ENCODE measurements at regions of chr15 and their contacts with region 1.

Region 1: GRCh38 chr15:67863442-67863987 is 23.7 kb upstream of the RNU6-1 start:
- DNase-seq: peak; percentile 82 to 86
- H3K4me3 ChIP-seq: peak overlapping the region; percentile 45
- H3K4me3 Mint-ChIP-seq: peak overlapping the region; percentile 70
- H3K27ac Mint-ChIP-seq: peak overlapping the region; percentile 80
- H3K4me1 ChIP-seq: peaks cover 9% of the 10 kb centered on the region; the same call in 1 of the 2 replicates
- H3K4me1 Mint-ChIP-seq: peaks cover 15% of the 10 kb centered on the region
- H3K27me3 ChIP-seq: no peaks in the 10 kb centered on the region
- H3K27me3 Mint-ChIP-seq: no peaks in the 10 kb centered on the region
- CTCF ChIP-seq: peak; percentile 89 to 91

Region 2: DNA sequence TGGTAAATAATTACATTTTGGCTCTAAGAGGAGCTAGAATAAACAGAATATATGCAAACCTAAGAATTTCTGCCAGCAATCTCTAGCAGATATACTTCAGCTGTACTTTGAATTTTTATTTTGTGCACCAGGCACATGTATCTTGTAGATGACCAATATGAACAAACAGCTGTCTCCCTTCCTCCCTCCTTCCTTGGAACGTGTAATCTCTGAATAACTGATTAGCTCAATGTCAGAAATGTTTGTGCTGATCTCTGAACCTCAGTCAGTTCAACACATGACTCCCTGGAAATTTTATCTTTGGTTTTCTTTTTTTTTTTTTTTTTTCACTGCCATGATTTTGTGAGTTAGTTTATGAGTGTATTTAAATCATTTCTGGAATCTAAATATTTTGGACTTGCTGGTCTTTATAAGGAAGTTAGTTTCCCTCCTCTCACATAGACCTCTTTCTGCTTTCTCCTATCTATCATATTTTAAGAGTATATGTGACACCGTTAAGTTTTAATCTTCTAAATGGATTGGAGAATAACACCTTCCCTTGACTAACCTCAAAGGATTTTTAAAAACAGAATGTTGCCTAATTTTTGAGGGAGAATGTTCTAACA is 251.6 kb before region 1 on chr15:
- CTCF ChIA-PET with region 1: no interaction called
- POLR2A ChIA-PET with region 1: no interaction called
- intact Hi-C with region 1: no loop called
- DNase-seq: no peak
- H3K4me3 ChIP-seq: no peak overlapping the region
- H3K4me3 Mint-ChIP-seq: no peak overlapping the region
- H3K27ac Mint-ChIP-seq: no peak overlapping the region
- H3K4me1 ChIP-seq: no peaks in the 10 kb centered on the region
- H3K4me1 Mint-ChIP-seq: peaks cover 7% of the 10 kb centered on the region
- H3K27me3 ChIP-seq: no peaks in the 10 kb centered on the region
- H3K27me3 Mint-ChIP-seq: no peaks in the 10 kb centered on the region
- CTCF ChIP-seq: no peak

Region 3: DNA sequence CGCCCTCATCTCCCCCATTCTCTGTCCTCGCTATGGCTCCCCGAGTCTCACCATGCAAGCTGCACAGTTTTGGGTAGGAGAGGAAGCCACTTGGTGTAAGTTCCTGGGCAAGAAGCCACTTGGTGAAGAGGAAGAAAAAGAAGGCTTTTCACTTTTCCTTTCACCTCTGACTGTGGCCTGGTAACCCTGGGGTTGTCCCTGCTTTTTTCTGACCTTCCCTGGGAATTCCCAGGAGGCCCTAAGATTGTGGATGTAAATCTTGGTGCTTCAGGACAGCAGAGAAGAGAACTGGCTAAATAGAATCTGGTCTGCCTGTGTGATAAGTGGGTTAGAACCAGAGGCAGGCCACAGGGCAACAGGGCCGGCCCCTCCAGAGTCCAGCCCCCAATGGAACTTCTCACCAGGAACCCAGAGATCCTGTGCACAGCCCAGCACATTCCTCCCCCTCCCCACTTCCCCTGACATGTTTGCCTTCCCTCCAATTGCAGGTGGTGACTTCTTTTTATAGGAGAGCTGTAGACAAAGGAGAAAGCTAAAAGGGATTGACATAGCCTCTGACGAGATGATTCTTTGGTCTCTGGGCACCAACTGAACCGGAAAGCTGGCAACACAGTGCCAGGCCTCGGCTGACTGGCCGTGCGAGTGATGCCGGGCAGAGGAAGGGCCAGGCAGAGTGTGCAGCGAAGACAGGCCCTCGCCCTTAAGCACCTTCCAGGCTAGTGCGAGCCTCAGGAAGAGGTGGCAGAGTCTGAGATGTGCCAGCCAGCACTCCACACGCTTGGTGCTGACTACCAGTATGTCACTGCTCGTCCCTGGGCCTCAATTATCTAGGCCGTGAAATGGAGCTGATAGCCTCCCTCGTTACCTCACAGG is 57.6 kb before region 1 on chr15:
- CTCF ChIA-PET with region 1: no interaction called
- POLR2A ChIA-PET with region 1: no interaction called
- intact Hi-C with region 1: no loop called
- DNase-seq: peak in 1 of 2 experiments; percentile 22
- H3K4me3 ChIP-seq: no peak overlapping the region
- H3K4me3 Mint-ChIP-seq: no peak overlapping the region
- H3K27ac Mint-ChIP-seq: no peak overlapping the region
- H3K4me1 ChIP-seq: no peaks in the 10 kb centered on the region
- H3K4me1 Mint-ChIP-seq: no peaks in the 10 kb centered on the region
- H3K27me3 ChIP-seq: no peaks in the 10 kb centered on the region
- H3K27me3 Mint-ChIP-seq: no peaks in the 10 kb centered on the region
- CTCF ChIP-seq: no peak

Region 4: GRCh38 chr15:68154923-68155559 is 291.5 kb after region 1 on chr15:
- CTCF ChIA-PET with region 1: interaction called, 4 read pairs
- POLR2A ChIA-PET with region 1: no interaction called
- intact Hi-C with region 1: loop called (anchors 1 kb)
- DNase-seq: peak in 1 of 2 experiments; percentile 61
- H3K4me3 ChIP-seq: no peak overlapping the region
- H3K4me3 Mint-ChIP-seq: no peak overlapping the region
- H3K27ac Mint-ChIP-seq: no peak overlapping the region
- H3K4me1 ChIP-seq: peaks cover 12% of the 10 kb centered on the region
- H3K4me1 Mint-ChIP-seq: peaks cover 8% of the 10 kb centered on the region
- H3K27me3 ChIP-seq: no peaks in the 10 kb centered on the region
- H3K27me3 Mint-ChIP-seq: no peaks in the 10 kb centered on the region
- CTCF ChIP-seq: peak; percentile 65 to 72